H1 (cell line): ENCODE measurements at regions of chrX and their contacts with region 1.

Region 1: GRCh38 chrX:100413229-100413628 is 3.2 kb upstream of the PCDH19 start:
- DNase-seq: no peak
- H3K4me3 ChIP-seq: peak overlapping the region in 1 of 4 experiments; percentile 44; a peak in 1 of 8 replicates
- H3K27ac ChIP-seq: no peak overlapping the region
- H3K4me1 ChIP-seq: peaks cover 0 to 9% (median 1%) of the 10 kb centered on the region in 4 experiments; a peak in 5 of 7 replicates
- H3K27me3 ChIP-seq: peaks cover 29 to 44% (median 43%) of the 10 kb centered on the region in 4 experiments
- CTCF ChIP-seq: peak in 2 of 3 experiments; percentile 22 to 40; a peak in 3 of 4 replicates
- EP300 ChIP-seq: no peak
- POLR2A ChIP-seq: no peak
- RAD21 ChIP-seq: peak; percentile 69 to 72

Region 2: DNA sequence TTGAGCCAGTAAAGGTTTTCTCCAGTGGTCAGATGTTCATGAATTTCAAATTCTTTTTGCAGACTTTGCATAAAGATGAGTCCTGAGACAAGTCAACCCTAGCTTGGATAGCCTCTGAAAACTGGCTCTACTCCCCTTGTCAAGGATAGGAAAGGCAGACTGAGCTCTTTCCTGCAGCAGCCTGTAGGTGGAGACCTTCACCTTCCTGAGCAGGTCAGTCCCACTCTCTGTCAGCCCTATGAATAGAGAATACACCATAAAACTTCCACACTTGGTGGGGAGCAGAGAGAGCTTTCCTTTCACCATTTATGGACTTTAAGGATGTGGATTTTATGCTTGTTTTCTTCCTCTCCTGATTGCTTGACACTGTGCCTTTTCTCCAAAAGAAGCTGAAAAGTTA is 45.1 kb before region 1 on chrX:
- CTCF ChIA-PET with region 1: interaction called, 51 read pairs
- POLR2A ChIA-PET with region 1: no interaction called
- DNase-seq: no peak
- H3K4me3 ChIP-seq: no peak overlapping the region
- H3K27ac ChIP-seq: no peak overlapping the region
- H3K4me1 ChIP-seq: peaks cover 0 to 3% (median 0%) of the 10 kb centered on the region in 4 experiments; a peak in 1 of 7 replicates
- H3K27me3 ChIP-seq: no peaks in the 10 kb centered on the region
- CTCF ChIP-seq: peak; percentile 49 to 67 (median 57); a peak in 3 of 4 replicates
- EP300 ChIP-seq: no peak
- POLR2A ChIP-seq: no peak
- RAD21 ChIP-seq: peak; percentile 68 to 78

Region 3: GRCh38 chrX:100379388-100379986 is 33.7 kb before region 1 on chrX:
- CTCF ChIA-PET with region 1: interaction called, 11 read pairs
- POLR2A ChIA-PET with region 1: no interaction called
- DNase-seq: no peak
- H3K4me3 ChIP-seq: no peak overlapping the region
- H3K27ac ChIP-seq: no peak overlapping the region
- H3K4me1 ChIP-seq: peaks cover 0 to 3% (median 0%) of the 10 kb centered on the region in 4 experiments; a peak in 1 of 7 replicates
- H3K27me3 ChIP-seq: no peaks in the 10 kb centered on the region
- CTCF ChIP-seq: peak in 2 of 3 experiments; percentile 45 to 51; a peak in 3 of 4 replicates
- EP300 ChIP-seq: no peak
- POLR2A ChIP-seq: no peak
- RAD21 ChIP-seq: peak; percentile 50 to 58

Region 4: GRCh38 chrX:100395781-100396180 is 17.4 kb before region 1 on chrX:
- CTCF ChIA-PET with region 1: interaction called, 13 read pairs
- POLR2A ChIA-PET with region 1: interaction called, 8 read pairs
- DNase-seq: no peak
- H3K4me3 ChIP-seq: peak overlapping the region in 1 of 4 experiments; percentile 12; a peak in 1 of 8 replicates
- H3K27ac ChIP-seq: no peak overlapping the region
- H3K4me1 ChIP-seq: peaks cover 0 to 4% (median 3%) of the 10 kb centered on the region in 4 experiments; a peak in 5 of 7 replicates
- H3K27me3 ChIP-seq: peaks cover 13 to 41% (median 29%) of the 10 kb centered on the region in 4 experiments
- CTCF ChIP-seq: no peak
- EP300 ChIP-seq: no peak
- POLR2A ChIP-seq: no peak
- RAD21 ChIP-seq: no peak

Region 5: GRCh38 chrX:100424012-100424411 is 10.8 kb after region 1 on chrX:
- CTCF ChIA-PET with region 1: interaction called, 14 read pairs
- POLR2A ChIA-PET with region 1: no interaction called
- DNase-seq: peak in 1 of 2 experiments; percentile 49
- H3K4me3 ChIP-seq: no peak overlapping the region
- H3K27ac ChIP-seq: no peak overlapping the region
- H3K4me1 ChIP-seq: no peaks in the 10 kb centered on the region
- H3K27me3 ChIP-seq: no peaks in the 10 kb centered on the region
- CTCF ChIP-seq: peak; percentile 56 to 60 (median 57)
- EP300 ChIP-seq: no peak
- POLR2A ChIP-seq: no peak
- RAD21 ChIP-seq: peak; percentile 71 to 85

Region 6: DNA sequence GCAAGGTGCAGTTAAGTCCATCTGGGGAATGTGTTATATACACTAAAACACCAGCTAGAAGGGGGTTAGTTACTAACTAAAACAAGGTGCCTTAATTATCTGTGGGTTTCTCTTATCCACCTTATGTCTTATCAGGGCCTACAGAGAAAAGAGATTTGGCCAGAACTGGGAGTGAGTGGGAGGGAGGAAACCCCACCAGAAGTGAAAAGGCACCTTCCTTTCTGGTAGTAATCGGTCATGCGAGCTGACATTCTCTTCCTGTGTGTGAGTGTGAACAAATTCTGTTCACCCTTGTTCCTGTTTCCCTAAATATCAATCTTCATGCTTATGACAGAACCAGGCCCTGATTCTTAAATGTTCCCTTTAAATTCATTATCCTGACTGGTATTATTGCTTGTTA is 274.3 kb after region 1 on chrX:
- CTCF ChIA-PET with region 1: no interaction called
- POLR2A ChIA-PET with region 1: no interaction called
- DNase-seq: no peak
- H3K4me3 ChIP-seq: no peak overlapping the region
- H3K27ac ChIP-seq: no peak overlapping the region
- H3K4me1 ChIP-seq: no peaks in the 10 kb centered on the region
- H3K27me3 ChIP-seq: no peaks in the 10 kb centered on the region
- CTCF ChIP-seq: no peak
- EP300 ChIP-seq: no peak
- POLR2A ChIP-seq: no peak
- RAD21 ChIP-seq: no peak